Activated CD4-positive, alpha-beta memory T cell treated with anti-CD3 and anti-CD28 coated beads, Interleukin-2, amount 10 ng/mL, durations not matched to agents 7 days and 5 days (primary cell): ENCODE measurements at regions of chr5 and their contacts with region 1.

Region 1: DNA sequence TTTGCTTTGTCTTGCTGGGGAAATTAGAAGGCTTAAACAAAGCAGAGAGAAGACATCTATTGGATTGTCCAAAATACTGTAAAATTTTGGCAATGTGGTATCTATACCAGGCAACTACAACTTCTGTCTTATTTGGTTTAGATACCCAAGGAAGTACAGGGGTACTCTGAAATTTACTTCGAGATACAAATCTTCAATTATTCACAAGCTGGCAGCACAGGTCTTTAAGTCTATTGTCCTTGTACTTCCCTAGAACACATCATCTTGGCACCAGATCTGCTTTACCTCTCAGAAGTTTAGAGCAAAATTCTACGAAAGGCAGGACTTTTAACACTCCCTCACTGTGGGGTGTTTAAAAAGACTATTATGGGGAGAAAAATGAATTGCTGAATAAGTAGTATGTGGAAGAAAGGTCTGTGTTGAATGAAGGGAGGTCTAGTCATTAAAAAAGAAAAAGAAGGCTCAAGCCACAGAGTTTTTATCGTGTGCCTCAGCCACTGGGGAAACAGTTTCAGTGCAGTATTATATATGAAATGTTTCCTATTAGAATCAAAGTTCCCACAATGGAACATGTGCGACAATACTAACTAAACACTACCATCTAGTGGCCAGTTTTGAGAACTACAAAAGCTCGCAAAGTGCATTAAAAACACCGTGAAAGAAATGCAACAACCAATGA is 93.7 kb downstream of the PDE4D start:
- DNase-seq: no peak
- H3K4me3 Mint-ChIP-seq: no peak overlapping the region
- H3K27ac Mint-ChIP-seq: no peak overlapping the region
- H3K4me1 Mint-ChIP-seq: no peaks in the 10 kb centered on the region
- H3K27me3 Mint-ChIP-seq: peaks cover 11% of the 10 kb centered on the region

Region 2: GRCh38 chr5:59390074-59390659 is 409.6 kb before region 1 on chr5:
- CTCF ChIA-PET with region 1: interaction called, 19 read pairs
- POLR2A ChIA-PET with region 1: interaction called, 3 read pairs
- DNase-seq: no peak
- H3K4me3 Mint-ChIP-seq: no peak overlapping the region
- H3K27ac Mint-ChIP-seq: no peak overlapping the region
- H3K4me1 Mint-ChIP-seq: no peaks in the 10 kb centered on the region
- H3K27me3 Mint-ChIP-seq: peaks cover 17% of the 10 kb centered on the region

Region 3: DNA sequence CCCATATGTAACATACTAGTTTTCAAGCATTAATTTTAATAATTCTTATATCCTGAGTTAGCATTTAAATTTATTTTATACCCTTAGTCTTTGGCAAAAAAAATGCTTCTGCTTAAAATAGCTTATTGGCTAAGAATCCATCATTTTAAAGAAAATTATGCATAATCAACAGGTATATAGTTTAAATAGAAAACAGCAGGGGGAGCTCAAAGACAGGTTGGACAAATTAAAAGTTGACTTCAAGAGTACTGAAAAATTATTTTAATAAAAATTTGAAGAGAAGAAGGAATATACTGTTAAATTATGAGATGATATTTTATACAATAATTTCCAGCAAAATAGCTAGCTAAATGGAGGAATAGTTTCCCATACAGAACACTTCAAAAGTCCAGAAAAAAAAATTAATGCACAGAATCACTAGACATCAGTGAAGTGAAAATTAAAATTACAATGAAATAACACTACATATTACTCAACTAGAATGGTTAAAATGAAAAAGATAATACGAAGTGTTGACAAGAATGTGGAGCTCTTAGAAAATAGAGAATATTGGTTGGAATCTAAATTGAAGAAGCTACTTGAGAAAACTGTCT is 293.4 kb before region 1 on chr5:
- CTCF ChIA-PET with region 1: interaction called, 14 read pairs
- POLR2A ChIA-PET with region 1: no interaction called
- DNase-seq: no peak
- H3K4me3 Mint-ChIP-seq: no peak overlapping the region
- H3K27ac Mint-ChIP-seq: no peak overlapping the region
- H3K4me1 Mint-ChIP-seq: no peaks in the 10 kb centered on the region
- H3K27me3 Mint-ChIP-seq: peaks cover 11% of the 10 kb centered on the region

Region 4: DNA sequence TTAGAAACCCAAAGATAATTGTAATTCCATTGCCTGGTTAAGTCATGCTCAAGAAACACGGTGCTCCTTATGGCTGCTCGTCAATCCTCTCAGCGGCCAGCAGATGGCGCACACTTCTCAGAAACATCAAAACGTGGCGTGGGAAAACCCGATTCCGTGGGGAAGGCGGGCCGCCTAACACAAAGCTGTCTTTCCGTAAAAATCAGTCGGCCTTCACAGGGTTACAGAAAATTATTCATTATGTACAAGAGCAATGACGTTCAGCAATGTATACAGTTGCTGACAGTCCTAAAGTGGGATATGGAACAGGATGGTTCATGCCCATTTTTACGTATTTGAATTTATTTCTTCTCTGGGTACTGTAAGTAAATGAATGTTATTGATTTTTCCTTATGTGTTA is 10.2 kb after region 1 on chr5:
- CTCF ChIA-PET with region 1: interaction called, 11 read pairs
- POLR2A ChIA-PET with region 1: no interaction called
- DNase-seq: peak; percentile 60
- H3K4me3 Mint-ChIP-seq: no peak overlapping the region
- H3K27ac Mint-ChIP-seq: no peak overlapping the region
- H3K4me1 Mint-ChIP-seq: peaks cover 1% of the 10 kb centered on the region
- H3K27me3 Mint-ChIP-seq: peaks cover 11% of the 10 kb centered on the region

Region 5: DNA sequence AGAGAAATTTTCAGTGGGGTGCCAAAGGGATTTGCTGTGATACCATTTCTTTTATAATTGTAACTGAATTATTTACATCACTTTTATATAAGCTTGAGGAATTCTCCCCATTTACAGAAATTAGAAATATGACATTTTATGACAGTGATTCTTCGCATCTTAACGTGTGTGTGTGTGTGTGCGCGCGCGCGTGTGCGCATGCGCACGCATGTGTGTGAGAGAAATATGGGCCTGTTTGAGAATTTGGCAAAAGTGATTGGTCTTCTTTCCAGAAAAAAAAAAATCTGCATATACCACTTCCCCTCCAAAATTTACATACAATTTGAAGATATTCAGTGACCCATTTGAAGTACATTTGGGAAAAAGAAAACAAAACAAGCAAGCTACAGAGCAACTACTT is 284.4 kb after region 1 on chr5:
- CTCF ChIA-PET with region 1: no interaction called
- POLR2A ChIA-PET with region 1: no interaction called
- DNase-seq: no peak
- H3K4me3 Mint-ChIP-seq: no peak overlapping the region
- H3K27ac Mint-ChIP-seq: no peak overlapping the region
- H3K4me1 Mint-ChIP-seq: no peaks in the 10 kb centered on the region
- H3K27me3 Mint-ChIP-seq: no peaks in the 10 kb centered on the region